Astrocyte of the cerebellum (primary cell): ENCODE measurements at regions of chr2 and their contacts with region 1.

Region 1: DNA sequence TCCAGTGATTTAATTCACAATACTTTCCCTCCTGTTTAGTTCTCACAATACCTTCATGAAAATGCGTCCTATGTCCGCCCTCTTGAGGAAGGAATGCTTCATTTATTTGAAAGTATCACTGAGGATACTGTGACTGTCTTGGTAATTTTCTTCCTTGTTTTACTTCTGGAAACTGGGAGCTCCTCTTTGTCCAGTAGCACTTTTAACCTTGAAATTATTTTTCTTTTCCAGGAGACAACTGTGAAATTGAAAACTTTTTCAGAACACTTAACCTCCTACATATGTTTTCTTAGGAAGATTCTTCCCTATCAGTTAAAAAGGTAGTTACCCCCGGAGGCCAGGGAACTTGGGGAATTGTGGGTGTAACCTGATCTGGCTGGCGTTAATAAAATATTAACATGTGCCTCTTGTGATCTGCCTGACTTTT is 58.9 kb upstream of the STON1 start:
- DNase-seq: peak; percentile 80
- H3K4me3 ChIP-seq: no peak overlapping the region
- CTCF ChIP-seq: peak; percentile 55

Region 2: GRCh38 chr2:46876741-46877384 is 1594.2 kb before region 1 on chr2:
- in situ Hi-C with region 1: no loop called
- DNase-seq: peak; percentile 66
- H3K4me3 ChIP-seq: no peak overlapping the region
- CTCF ChIP-seq: peak; percentile 62

Region 3: DNA sequence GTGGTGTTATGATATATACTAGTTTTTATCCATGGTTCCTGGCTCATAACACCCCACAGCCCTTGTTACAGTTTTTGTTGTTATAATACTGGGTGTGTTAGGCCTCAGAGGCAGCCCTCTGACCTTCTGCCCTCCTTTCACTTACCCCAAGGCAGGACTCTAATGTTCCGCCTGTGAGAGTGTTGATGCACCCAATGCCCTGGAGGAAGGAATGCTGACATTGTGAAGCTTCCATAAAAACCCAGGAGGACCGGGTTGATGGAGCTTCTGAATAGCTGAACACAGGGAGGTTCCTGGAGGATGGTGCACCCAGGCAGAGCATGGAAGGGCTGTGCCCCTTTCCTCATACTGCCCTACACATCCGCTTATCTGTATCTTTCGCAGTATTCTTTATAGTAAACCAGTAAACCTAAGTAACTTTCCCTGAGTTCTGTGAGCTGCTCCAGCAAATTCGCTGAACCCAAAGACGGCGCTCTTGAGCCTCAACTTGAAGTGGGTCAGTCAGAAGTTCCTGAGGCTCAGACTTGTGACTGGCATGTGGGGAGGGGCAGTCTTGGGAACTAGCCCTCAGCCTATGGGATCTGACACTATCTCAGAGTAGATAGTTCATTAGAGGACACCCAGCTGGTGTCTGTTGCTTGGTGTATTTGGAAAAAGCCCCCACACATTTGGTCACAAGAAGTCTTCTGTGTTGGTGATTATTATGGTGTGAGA is 69.3 kb after region 1 on chr2:
- in situ Hi-C with region 1: no loop called
- DNase-seq: no peak
- H3K4me3 ChIP-seq: no peak overlapping the region
- CTCF ChIP-seq: no peak

Region 4: DNA sequence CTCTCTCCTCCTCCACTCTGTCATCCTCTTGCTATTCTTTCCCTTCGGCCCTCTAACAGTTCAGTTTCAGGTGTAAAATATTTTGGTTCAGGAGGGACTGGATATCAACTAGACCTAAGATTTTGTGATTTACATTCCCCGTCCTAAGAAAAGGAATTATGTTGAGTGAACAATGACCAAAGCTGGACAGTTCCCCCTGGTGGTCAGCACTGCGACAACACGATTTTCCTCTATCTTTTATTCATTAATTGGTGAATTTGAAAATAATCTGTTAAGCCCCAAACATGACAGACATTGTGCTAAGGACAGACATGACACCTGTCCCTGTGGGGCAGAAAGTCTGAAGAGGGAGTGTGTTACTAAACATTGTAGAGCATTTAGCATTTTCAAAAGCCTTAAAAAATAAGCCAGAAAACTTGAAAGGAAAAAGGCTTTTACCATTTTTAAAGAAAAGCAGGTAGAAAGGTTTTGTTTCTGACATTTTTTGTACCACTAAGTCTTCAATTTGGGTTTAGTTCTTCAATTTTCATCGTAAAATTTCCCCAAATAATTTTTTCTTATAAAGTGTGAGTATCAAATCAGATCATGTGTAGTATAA is 118.2 kb after region 1 on chr2:
- in situ Hi-C with region 1: loop called (anchors 25 kb)
- DNase-seq: no peak
- H3K4me3 ChIP-seq: no peak overlapping the region
- CTCF ChIP-seq: peak; percentile 73

Region 5: GRCh38 chr2:49664827-49665226 is 1193.8 kb after region 1 on chr2:
- in situ Hi-C with region 1: no loop called
- DNase-seq: no peak
- H3K4me3 ChIP-seq: no peak overlapping the region
- CTCF ChIP-seq: no peak

Region 6: DNA sequence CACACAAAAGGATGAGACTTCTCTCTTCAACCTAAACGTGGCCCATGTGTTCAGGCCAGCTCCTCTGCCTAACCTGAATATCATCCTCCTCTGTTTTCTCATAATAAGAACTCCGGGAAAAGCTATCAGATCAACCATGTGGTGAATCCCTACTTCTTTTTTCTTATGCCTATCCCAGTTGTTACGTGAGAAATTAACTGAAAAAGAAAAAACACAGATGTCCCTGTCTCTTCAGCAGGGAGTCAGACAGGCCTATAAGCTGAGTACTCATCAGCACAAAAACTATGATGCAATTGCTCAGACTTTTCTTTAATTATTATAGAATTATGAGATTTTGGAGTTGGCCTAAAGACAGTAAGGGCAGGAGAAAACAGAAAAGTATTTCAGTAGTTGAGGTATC is 1296.3 kb after region 1 on chr2:
- in situ Hi-C with region 1: no loop called
- DNase-seq: no peak
- H3K4me3 ChIP-seq: no peak overlapping the region
- CTCF ChIP-seq: no peak